Calu3 (cell line): ENCODE measurements at regions of chr1 and their contacts with region 1.

Region 1: DNA sequence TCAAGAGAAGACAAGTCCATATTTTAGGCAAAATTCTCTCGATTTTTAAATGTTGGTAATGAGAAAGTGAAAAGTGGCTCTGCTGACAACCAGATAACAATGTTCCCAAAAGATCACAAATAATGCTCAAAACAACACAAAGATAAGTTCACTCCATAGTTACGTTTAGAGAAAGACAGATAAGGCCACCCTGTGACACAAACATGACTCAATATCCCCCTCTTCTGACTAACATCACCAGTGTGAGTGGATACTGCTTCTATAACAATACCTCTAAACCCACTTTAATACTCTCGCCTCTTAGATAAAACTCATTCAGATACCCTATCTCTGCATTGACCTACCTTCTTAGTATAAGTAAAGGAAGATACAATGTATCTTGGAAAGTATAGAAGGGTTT is 51.2 kb upstream of the RGS7 start:
- DNase-seq: peak; percentile 18
- H3K4me3 Mint-ChIP-seq: no peak overlapping the region
- H3K27ac Mint-ChIP-seq: no peak overlapping the region
- H3K4me1 Mint-ChIP-seq: no peaks in the 10 kb centered on the region
- H3K27me3 Mint-ChIP-seq: peaks cover 14% of the 10 kb centered on the region
- CTCF ChIP-seq: peak; percentile 17

Region 2: GRCh38 chr1:240435968-240436566 is 972.1 kb before region 1 on chr1:
- CTCF ChIA-PET with region 1: no interaction called
- intact Hi-C with region 1: no loop called
- DNase-seq: no peak
- H3K4me3 Mint-ChIP-seq: no peak overlapping the region
- H3K27ac Mint-ChIP-seq: no peak overlapping the region
- H3K4me1 Mint-ChIP-seq: no peaks in the 10 kb centered on the region
- H3K27me3 Mint-ChIP-seq: no peaks in the 10 kb centered on the region
- CTCF ChIP-seq: no peak

Region 3: DNA sequence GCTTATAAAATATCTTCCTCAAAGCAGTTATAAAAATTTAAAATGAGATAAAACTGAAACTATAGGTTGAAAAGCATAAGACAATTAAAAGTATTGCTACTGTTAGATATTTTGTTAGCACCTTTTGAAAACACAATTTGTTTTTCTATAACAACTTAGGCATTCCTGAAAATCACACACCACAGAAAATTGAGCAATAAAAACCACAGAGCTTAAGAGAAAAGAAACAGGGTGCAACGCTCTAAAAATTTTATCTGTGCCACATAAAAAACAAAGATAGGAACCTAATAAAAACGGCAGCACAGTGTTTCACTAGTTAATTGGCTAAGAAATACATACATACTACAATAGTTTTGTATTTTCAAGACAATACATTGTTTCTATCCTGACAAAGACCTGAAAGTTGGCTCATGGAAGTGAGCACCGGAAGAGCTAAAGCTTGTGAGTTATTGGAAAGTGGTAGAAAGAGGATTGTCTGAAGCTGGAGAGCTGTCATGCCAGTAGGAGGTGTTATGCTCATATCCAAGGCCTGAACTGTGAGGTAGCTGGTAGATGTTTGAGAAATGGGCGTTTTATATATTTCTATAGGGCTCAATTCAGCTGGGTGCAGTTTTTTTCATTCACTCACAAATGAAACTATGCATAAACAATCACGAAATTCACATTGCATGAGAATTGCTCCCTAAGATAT is 97.0 kb before region 1 on chr1:
- CTCF ChIA-PET with region 1: no interaction called
- intact Hi-C with region 1: loop called (anchors 5 kb)
- DNase-seq: no peak
- H3K4me3 Mint-ChIP-seq: no peak overlapping the region
- H3K27ac Mint-ChIP-seq: no peak overlapping the region
- H3K4me1 Mint-ChIP-seq: peaks cover 9% of the 10 kb centered on the region
- H3K27me3 Mint-ChIP-seq: no peaks in the 10 kb centered on the region
- CTCF ChIP-seq: no peak

Region 4: GRCh38 chr1:241677201-241677600 is 269.0 kb after region 1 on chr1:
- CTCF ChIA-PET with region 1: no interaction called
- intact Hi-C with region 1: no loop called
- DNase-seq: no peak
- H3K4me3 Mint-ChIP-seq: no peak overlapping the region
- H3K27ac Mint-ChIP-seq: no peak overlapping the region
- H3K4me1 Mint-ChIP-seq: peaks cover 3% of the 10 kb centered on the region
- H3K27me3 Mint-ChIP-seq: peaks cover 25% of the 10 kb centered on the region
- CTCF ChIP-seq: no peak